Posterior cingulate gyrus (tissue), 11 donors: ENCODE measurements at regions of chr16 and their contacts with region 1.

Region 1: GRCh38 chr16:31142109-31143010 is 6.8 kb upstream of the PRSS8 start:
- DNase-seq: peak; percentile 91 to 100 (median 94)

Region 2: DNA sequence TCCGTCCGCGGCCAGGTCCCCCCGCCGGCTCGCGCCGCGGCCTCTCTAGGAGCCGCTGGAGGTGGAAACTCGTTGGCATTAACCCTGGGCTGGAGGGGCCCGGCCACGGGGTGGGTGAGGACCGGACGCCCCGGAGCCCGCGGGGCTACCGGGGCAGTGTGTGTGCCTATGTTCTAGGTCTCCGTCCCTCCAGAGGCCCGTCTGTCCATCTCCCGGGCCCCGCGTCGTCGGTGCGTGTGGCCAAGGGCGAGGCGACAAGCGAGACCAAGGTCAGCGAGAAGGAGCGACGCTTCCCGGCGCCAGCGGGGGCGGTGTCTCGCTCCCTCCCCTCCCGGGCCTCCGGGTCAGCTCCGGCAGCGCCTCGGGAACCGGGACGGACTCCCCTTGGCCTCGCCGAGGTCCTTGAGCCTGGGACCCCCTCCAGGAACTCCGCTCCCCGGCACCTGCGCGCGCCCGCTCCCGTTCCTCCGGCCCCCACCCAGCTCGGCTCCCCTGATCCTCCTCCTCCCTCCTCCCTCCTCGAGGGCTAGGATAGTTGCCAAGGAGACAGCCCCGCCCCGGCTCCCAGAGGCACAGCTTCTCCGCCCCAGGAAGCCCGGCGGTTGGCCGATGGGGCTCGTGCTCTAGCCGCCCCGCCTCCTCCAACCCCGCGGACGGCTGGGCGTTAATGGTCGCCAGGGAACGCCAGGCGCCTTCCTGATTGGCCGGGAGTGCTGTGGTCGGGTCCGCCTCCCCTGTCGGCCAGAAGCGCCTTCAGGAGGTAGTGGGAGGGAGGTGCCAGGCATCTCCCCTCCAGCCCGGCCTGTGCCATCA is 615.3 kb before region 1 on chr16:
- intact Hi-C with region 1: no loop called
- DNase-seq: peak; percentile 94 to 100 (median 98)

Region 3: GRCh38 chr16:31094424-31095120 is 47.8 kb before region 1 on chr16 and contains the start of gene VKORC1:
- intact Hi-C with region 1: loop called (anchors 1 kb)
- DNase-seq: peak; percentile 90 to 99 (median 94)

Region 4: DNA sequence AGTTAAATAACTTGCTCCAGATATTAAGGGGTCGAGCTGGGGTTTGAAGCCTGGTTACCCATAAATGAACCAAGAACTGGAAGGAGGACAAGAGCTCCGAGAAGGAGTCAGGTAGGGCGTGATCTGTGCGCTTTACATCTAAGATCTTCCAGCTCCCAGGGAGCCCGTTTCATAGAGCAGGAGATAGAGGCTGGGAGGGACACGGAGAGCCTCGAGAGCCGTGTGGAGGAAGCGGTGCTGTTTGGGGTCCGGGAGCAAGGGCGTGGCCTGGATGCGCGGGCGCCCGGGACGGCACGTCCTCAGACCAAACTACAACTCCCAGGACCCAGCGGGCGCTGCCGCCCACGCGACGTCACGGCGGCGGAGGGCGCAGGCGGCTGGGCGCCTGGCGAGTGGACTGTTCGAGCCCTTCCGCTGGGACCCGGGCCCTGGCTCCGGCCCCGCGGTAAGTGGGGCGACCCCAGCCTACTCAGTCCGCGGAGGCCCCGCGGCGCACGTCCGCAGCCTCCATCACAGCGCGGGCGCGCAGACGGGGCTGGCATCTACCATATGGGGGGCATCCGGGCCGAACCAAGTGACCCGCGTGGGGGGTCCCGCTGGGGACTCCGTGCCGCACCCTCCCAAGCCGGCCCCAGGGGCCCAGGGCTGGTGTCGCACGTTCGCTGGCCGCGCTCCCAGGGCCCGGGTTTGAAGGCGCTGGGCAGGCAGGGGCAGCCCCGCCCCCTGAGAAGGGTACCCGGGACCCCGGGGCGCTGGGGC is 34.1 kb before region 1 on chr16 and contains the start of gene BCKDK:
- intact Hi-C with region 1: loop called (anchors 5 kb)
- DNase-seq: peak; percentile 66 to 97 (median 77)

Region 5: DNA sequence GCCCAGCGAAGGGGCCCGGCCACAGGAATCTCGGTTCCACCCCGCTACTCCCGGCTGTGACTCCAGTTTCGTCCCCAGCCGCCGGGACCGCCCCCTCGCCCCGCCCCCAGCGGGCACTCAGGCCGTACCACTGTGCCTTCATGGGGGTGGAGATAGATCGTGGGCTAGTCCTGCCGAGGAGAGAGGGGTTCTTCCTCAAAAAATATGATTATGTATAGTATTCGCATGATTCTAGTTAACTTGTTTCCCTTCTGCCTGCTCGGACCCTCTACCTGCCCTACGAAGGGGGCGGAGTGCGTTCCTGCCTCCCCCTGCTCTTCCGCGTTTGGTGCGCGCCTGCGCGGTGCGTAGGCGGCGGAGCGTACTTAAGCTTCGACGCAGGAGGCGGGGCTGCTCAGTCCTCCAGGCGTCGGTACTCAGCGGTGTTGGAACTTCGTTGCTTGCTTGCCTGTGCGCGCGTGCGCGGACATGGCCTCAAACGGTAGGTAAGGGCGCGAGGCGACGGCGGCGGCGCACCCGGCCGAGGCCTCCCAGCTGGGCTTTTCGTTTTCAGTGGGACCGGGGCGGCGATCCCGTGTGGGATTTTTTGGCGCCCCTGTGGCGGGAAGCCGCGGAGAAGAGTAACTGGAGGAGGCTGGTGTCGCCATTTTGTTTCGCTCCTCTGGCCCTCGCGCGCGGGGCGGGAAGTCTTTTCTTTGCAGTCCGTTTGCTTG is 37.5 kb after region 1 on chr16 and contains the start of gene FUS:
- intact Hi-C with region 1: loop called (anchors 2 kb)
- DNase-seq: peak; percentile 84 to 98 (median 90)

Region 6: GRCh38 chr16:31215287-31216162 is 73.2 kb after region 1 on chr16:
- intact Hi-C with region 1: no loop called
- DNase-seq: peak in 6 of 10 donors; percentile 28 to 89 (median 54)